ENCODE measurements at regions of chr11 and their contacts with region 1.

Region 1: GRCh38 chr11:95849087-95849825 is 59.0 kb downstream of the CEP57 start:
- DNase-seq: peak; percentile 49
- H3K4me3 ChIP-seq: no peak overlapping the region
- H3K27ac ChIP-seq: no peak overlapping the region
- H3K4me1 ChIP-seq: no peaks in the 10 kb centered on the region
- H3K27me3 ChIP-seq: no peaks in the 10 kb centered on the region
- CTCF ChIP-seq: peak in 3 of 4 experiments; percentile 42 to 59 (median 55)
- POLR2A ChIP-seq: no peak

Region 2: DNA sequence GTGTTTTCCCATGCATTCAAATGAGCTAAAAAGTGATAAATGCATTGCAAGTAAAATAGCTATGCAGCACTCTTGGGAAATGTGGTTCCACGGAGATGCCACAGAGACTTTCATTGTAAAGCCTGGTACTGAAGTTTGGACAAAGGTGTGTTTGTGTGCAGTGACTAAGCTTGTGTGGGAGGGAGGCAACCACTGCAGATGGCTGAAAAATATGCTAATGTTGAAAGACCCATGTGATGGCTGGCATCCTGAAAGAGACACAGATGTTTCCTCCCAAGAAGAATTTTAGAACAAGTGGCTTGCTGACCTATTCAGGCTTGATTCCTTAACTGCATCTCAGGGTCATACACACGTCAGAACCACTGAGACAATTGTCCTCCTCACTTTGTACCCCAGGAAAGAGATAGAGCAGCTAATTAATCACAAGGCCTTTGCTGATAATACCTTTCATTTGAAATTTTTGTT is 133.4 kb before region 1 on chr11:
- intact Hi-C with region 1: no loop called
- DNase-seq: no peak
- H3K4me3 ChIP-seq: no peak overlapping the region
- H3K27ac ChIP-seq: no peak overlapping the region
- H3K4me1 ChIP-seq: no peaks in the 10 kb centered on the region
- H3K27me3 ChIP-seq: no peaks in the 10 kb centered on the region
- CTCF ChIP-seq: no peak
- POLR2A ChIP-seq: no peak

Region 3: GRCh38 chr11:95917193-95918036 is 68.2 kb after region 1 on chr11:
- intact Hi-C with region 1: loop called (anchors 10 kb)
- DNase-seq: no peak
- H3K4me3 ChIP-seq: no peak overlapping the region
- H3K27ac ChIP-seq: peak overlapping the region in 1 of 2 donors; percentile 93
- H3K4me1 ChIP-seq: peaks cover 16% of the 10 kb centered on the region
- H3K27me3 ChIP-seq: no peaks in the 10 kb centered on the region
- CTCF ChIP-seq: no peak
- POLR2A ChIP-seq: no peak

Region 4: GRCh38 chr11:96012086-96012824 is 163.0 kb after region 1 on chr11:
- intact Hi-C with region 1: loop called (anchors 10 kb)
- DNase-seq: peak; percentile 42
- H3K4me3 ChIP-seq: no peak overlapping the region
- H3K27ac ChIP-seq: peak overlapping the region in 1 of 2 donors; percentile 29
- H3K4me1 ChIP-seq: no peaks in the 10 kb centered on the region
- H3K27me3 ChIP-seq: no peaks in the 10 kb centered on the region
- CTCF ChIP-seq: peak in 3 of 4 experiments; percentile 40 to 54 (median 52)
- POLR2A ChIP-seq: no peak

Region 5: DNA sequence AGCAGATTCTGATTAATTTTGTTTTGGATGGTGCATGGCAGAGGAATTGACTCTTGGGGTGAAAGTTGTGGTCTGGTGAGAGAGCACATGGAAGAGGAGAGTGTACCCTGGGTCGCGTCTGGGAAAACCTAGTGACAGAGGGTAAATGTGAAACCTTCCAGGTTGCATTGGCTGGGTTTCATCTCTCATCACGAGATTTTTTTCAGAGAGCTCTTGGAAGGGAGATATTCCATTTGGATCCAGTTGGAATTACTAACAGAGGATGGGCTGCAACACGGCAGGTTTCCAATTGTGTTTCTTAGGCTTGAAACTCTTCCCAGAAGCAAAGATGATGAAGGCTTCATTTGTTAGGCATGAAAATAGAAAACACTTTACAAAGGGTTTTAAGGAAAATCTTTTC is 184.3 kb after region 1 on chr11:
- intact Hi-C with region 1: no loop called
- DNase-seq: no peak
- H3K4me3 ChIP-seq: no peak overlapping the region
- H3K27ac ChIP-seq: no peak overlapping the region
- H3K4me1 ChIP-seq: no peaks in the 10 kb centered on the region
- H3K27me3 ChIP-seq: no peaks in the 10 kb centered on the region
- CTCF ChIP-seq: no peak
- POLR2A ChIP-seq: no peak

Measured in prostate gland (tissue), 2 donors.